ENCODE measurements at regions of chr1 and their contacts with region 1.

Region 1: GRCh38 chr1:13725714-13726175 is 25.8 kb downstream of the PRDM2 start:
- DNase-seq: peak; percentile 56
- H3K4me3 ChIP-seq: no peak overlapping the region
- CTCF ChIP-seq: peak; percentile 45

Region 2: DNA sequence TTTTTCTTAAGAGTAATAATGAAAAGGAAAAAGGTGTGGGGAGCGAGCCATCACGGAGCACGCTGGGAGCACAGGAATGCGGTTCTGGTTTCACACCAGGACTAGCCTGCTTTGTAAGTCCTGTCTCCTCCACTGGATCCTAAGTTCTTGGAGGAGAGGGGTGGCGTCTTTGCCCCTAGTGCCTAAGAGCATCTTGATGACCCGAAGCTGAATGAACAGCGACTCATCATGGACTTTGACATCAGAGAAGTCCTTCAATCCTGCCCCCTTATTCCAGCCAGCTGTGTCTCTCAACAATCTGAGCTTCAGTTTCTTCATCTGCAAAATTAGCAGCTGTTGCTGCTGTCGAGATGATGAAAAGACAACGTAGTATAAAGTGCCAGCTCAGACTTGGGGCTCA is 30.9 kb before region 1 on chr1:
- CTCF ChIA-PET with region 1: no interaction called
- POLR2A ChIA-PET with region 1: no interaction called
- DNase-seq: no peak
- H3K4me3 ChIP-seq: no peak overlapping the region
- CTCF ChIP-seq: no peak

Region 3: GRCh38 chr1:13707164-13707563 is 18.6 kb before region 1 on chr1:
- CTCF ChIA-PET with region 1: interaction called, 14 read pairs
- POLR2A ChIA-PET with region 1: no interaction called
- DNase-seq: no peak
- H3K4me3 ChIP-seq: no peak overlapping the region
- CTCF ChIP-seq: no peak

Region 4: GRCh38 chr1:13714851-13715250 is 10.9 kb before region 1 on chr1:
- CTCF ChIA-PET with region 1: interaction called, 32 read pairs
- POLR2A ChIA-PET with region 1: no interaction called
- DNase-seq: no peak
- H3K4me3 ChIP-seq: no peak overlapping the region
- CTCF ChIP-seq: no peak

Region 5: DNA sequence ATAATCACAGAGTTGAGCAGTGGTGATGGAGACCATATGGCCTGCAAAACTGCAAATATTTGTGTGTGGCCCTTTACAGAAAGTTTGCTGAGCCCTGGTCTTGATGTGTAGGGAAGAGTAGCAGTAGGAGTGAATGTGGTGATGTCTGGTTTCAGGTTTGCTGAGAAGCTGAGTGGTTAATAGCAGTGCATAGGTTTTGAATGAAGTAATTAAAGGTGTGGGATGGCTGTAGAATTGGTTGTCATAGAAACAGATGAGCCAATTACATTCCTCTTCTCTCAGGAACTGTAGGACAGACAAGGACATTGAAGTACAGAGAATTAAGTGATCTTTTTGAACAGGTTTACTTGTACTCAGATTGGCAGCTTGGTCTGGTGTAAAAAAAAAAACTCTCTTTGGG is 11.7 kb after region 1 on chr1:
- CTCF ChIA-PET with region 1: interaction called, 12 read pairs
- POLR2A ChIA-PET with region 1: no interaction called
- DNase-seq: no peak
- H3K4me3 ChIP-seq: no peak overlapping the region
- CTCF ChIP-seq: no peak

Region 6: GRCh38 chr1:13754510-13755103 is 28.9 kb after region 1 on chr1:
- CTCF ChIA-PET with region 1: interaction called, 10 read pairs
- POLR2A ChIA-PET with region 1: interaction called, 3 read pairs
- DNase-seq: no peak
- H3K4me3 ChIP-seq: no peak overlapping the region
- CTCF ChIP-seq: no peak

Region 7: GRCh38 chr1:13775459-13775858 is 49.7 kb after region 1 on chr1:
- CTCF ChIA-PET with region 1: no interaction called
- POLR2A ChIA-PET with region 1: no interaction called
- DNase-seq: no peak
- H3K4me3 ChIP-seq: no peak overlapping the region
- CTCF ChIP-seq: no peak